ENCODE measurements at regions of chr14 and their contacts with region 1.

Region 1: GRCh38 chr14:73759714-73760597 is 45.8 kb upstream of the PNMA1 start:
- DNase-seq: peak; percentile 92
- CTCF ChIP-seq: no peak

Region 2: GRCh38 chr14:73709896-73710469 is 50.0 kb before region 1 on chr14:
- CTCF ChIA-PET with region 1: no interaction called
- POLR2A ChIA-PET with region 1: no interaction called
- DNase-seq: no peak
- CTCF ChIP-seq: no peak

Region 3: GRCh38 chr14:73741386-73741875 is 18.5 kb before region 1 on chr14:
- CTCF ChIA-PET with region 1: interaction called, 102 read pairs
- POLR2A ChIA-PET with region 1: interaction called, 26 read pairs
- DNase-seq: peak; percentile 75
- CTCF ChIP-seq: no peak

Region 4: DNA sequence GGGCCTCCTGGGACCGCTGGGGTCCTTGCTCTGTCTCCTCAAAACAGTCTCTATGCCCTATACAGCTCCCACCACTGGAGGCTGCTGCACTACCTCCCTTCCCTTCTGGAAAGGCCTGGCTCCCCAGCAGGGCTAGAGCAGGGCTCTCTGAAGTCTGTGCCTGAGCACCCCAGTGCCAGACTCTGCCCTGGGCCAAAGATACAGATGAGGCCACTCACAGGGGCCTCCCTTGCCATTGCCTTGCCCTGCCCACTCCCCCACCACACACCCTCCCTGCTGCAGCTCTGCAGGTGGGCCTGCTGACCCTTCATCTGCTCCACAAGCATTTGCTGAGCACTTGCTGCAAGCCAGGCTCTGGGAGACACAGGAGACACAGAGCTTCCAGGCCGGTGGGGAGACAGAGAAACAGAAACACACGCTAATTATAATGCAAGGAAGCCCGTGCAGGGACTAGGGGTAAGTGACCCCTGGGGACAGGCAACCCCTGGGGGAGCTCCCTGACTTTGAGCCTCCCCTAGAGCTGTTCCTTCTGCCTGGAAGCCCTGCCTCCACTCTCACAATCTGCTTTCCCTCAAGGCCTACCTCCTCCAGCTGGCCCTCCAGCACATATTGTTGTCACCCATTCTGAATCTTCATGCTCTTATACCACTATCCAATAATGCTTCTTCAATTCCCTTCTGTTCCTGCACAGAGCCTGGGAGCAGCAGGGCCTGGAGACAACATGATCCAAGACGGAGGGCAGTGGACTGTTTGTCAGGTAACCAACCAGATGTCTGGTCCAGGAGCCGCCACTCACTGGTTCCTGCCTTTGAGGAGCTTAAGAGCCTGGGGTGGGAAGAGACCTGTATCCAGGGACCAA is 13.2 kb before region 1 on chr14:
- CTCF ChIA-PET with region 1: interaction called, 102 read pairs
- POLR2A ChIA-PET with region 1: interaction called, 26 read pairs
- DNase-seq: no peak
- CTCF ChIP-seq: peak; percentile 21

Region 5: GRCh38 chr14:73771848-73772638 is 12.1 kb after region 1 on chr14:
- CTCF ChIA-PET with region 1: interaction called, 83 read pairs
- POLR2A ChIA-PET with region 1: interaction called, 44 read pairs
- DNase-seq: peak; percentile 78
- CTCF ChIP-seq: no peak

Region 6: GRCh38 chr14:73785873-73786695 is 26.1 kb after region 1 on chr14:
- CTCF ChIA-PET with region 1: interaction called, 68 read pairs
- POLR2A ChIA-PET with region 1: interaction called, 6 read pairs
- DNase-seq: no peak
- CTCF ChIP-seq: no peak